ENCODE measurements at regions of chr19 and their contacts with region 1.

Region 1: DNA sequence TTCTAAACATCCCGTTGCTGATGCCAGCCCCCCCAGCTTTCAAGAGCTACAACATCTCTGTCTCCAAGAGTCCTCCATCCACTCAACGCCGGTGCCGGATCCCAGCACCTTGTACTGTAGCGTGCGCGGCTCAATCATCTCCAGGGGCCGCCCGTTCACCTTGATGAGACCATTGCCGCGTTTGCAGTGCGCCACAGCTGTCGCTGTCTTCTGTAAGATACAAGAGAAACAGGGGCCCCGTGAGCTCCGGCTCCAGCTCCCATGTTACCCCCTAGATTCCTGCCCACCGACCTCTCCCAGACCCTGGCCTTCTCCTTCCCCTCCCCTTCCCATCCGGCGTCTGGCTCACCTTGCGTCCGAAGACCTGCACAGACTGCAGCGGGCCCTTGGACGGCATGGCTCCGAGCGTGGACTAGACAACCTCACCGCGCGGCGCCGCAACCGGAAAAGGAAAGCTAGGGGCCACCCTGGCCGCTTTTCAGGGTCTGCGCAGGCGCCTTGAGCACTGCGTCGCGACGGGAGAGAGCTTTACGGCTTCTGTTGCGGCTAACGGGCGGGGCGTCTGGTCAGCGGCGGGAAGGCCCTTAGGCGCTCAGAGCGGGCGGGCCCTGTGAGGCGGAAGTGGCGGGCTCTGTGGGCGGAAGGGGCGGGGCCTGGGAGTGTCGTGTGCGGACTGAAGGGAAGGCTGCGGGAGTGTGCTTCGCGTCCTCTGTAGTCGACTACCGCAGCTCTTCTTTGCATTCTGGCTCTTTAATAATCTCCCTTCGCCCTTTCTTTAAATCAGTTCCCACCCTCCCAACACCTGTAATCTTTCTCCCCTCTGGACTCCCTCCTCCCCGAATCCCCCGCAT is at the start of gene RPS16:
- DNase-seq: peak; percentile 100
- ATAC-seq: peak; percentile 87
- H3K4me3 ChIP-seq: peak within 1 kb of the TSS; percentile 29 to 58
- H3K27ac ChIP-seq: peak within 1 kb of the TSS; percentile 84
- H3K4me1 ChIP-seq: peaks cover 77% of the 10 kb centered on the region
- H3K27me3 ChIP-seq: no peaks in the 10 kb centered on the region
- CTCF ChIP-seq: no peak
- total RNA-seq, gene RPS16: 27,832 TPM

Region 2: DNA sequence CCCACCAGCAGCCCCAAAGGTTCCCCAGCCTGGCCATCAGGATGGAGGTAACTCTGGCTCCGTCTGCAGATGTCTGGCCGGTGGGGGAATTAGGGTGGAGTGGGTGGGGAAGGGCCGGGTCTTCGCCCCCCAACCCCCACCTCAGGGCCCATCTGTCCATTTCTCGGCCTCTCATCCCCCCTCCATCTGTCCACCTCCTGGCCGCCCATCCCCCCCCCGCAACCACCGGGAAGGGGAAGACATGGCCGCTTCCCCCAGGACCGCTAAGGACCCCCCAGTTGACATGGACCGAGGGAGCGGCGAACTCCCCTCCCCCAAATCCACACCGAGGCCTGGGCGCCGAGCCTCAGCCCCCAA is 115.9 kb before region 1 on chr19:
- CTCF ChIA-PET with region 1: interaction called, 10 read pairs
- POLR2A ChIA-PET with region 1: interaction called, 5 read pairs
- in situ Hi-C with region 1: no loop called
- intact Hi-C with region 1: no loop called
- DNase-seq: no peak
- ATAC-seq: no peak
- H3K4me3 ChIP-seq: peak overlapping the region; percentile 34 to 56
- H3K27ac ChIP-seq: no peak overlapping the region; the same call in 1 of the 2 replicates
- H3K4me1 ChIP-seq: peaks cover 4% of the 10 kb centered on the region
- H3K27me3 ChIP-seq: peaks cover 6% of the 10 kb centered on the region
- CTCF ChIP-seq: no peak

Region 3: GRCh38 chr19:39390755-39391592 is 44.8 kb before region 1 on chr19 and contains the starts of genes MED29 and PAF1:
- CTCF ChIA-PET with region 1: interaction called, 9 read pairs
- POLR2A ChIA-PET with region 1: interaction called, 524 read pairs
- in situ Hi-C with region 1: no loop called
- intact Hi-C with region 1: no loop called
- DNase-seq: peak; percentile 100
- ATAC-seq: peak; percentile 96
- H3K4me3 ChIP-seq: peak within 1 kb of the TSS; percentile 39 to 51
- H3K27ac ChIP-seq: peak within 1 kb of the TSS; percentile 86
- H3K4me1 ChIP-seq: peaks cover 24% of the 10 kb centered on the region
- H3K27me3 ChIP-seq: no peaks in the 10 kb centered on the region
- CTCF ChIP-seq: no peak
- total RNA-seq, gene MED29: 739 TPM
- total RNA-seq, gene PAF1: 901 TPM

Region 4: DNA sequence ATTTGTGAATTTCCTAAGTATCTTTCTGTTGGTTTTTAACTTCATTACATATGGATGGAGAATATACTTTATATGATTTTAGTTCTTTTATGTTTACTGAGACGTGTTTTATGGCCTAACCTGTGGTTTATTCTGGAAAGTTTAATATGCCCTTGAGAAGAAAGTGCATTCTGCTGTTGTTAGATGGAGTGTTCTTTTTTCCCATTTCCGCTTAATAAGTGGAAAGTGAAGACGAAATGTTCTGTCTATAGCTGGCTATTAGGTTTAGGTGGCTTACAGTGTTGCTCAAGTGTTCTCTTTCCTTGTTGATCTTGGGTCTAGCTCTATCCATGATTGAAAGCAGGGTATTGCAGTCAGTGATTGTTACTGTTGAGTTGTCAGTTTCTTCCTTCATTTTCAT is 27.7 kb after region 1 on chr19:
- CTCF ChIA-PET with region 1: interaction called, 20 read pairs
- POLR2A ChIA-PET with region 1: interaction called, 41 read pairs
- in situ Hi-C with region 1: no loop called
- intact Hi-C with region 1: no loop called
- DNase-seq: no peak
- ATAC-seq: no peak
- H3K4me3 ChIP-seq: no peak overlapping the region
- H3K27ac ChIP-seq: no peak overlapping the region
- H3K4me1 ChIP-seq: no peaks in the 10 kb centered on the region
- H3K27me3 ChIP-seq: no peaks in the 10 kb centered on the region
- CTCF ChIP-seq: no peak

Region 5: DNA sequence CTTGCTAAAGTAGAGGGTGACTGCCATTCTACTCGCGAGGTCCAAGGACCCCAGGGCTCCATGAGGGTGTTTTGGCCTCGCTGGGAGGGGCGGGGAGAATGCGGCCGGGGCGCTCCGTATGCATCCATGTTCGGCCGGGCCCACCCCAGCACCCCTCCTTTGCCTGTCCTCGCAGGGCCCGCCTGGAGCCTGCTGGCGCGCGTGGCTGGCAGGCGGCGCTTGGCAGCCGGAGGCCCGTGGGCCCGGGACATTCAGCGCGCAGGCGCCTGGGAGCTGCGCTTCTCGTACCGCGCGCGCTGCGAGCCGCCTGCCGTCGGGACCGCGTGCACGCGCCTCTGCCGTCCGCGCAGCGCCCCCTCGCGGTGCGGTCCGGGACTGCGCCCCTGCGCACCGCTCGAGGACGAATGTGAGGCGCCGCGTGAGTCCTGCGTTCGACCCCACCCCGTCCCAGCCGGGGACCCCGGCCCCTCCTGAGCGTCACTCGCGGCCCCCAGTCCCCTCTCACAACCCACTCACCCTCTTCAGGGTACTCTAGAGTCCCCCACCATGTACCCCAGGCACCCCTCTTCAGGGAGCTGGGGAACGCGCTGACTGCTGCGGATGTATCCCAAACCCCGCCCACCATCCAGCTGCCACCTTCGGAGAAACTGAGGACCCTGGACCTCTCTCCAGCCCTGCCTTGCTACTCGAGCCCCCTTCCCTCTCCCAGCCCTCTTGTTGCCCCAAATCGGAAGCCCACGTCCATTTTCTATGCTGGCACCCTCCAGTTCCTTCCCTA is 67.1 kb after region 1 on chr19:
- CTCF ChIA-PET with region 1: interaction called, 104 read pairs
- POLR2A ChIA-PET with region 1: interaction called, 66 read pairs
- in situ Hi-C with region 1: no loop called
- intact Hi-C with region 1: loop called (anchors 2 kb)
- DNase-seq: peak; percentile 93
- ATAC-seq: peak; percentile 24
- H3K4me3 ChIP-seq: peak overlapping the region in 1 of 2 experiments; percentile 34; a peak in 2 of 4 replicates
- H3K27ac ChIP-seq: peak overlapping the region; percentile 3; the same call in 1 of the 2 replicates
- H3K4me1 ChIP-seq: peaks cover 27% of the 10 kb centered on the region
- H3K27me3 ChIP-seq: peaks cover 8% of the 10 kb centered on the region
- CTCF ChIP-seq: no peak

Region 6: GRCh38 chr19:39563408-39563807 is 127.7 kb after region 1 on chr19:
- CTCF ChIA-PET with region 1: interaction called, 6 read pairs
- POLR2A ChIA-PET with region 1: interaction called, 23 read pairs
- in situ Hi-C with region 1: no loop called
- intact Hi-C with region 1: no loop called
- DNase-seq: peak; percentile 81
- ATAC-seq: peak; percentile 10
- H3K4me3 ChIP-seq: no peak overlapping the region
- H3K27ac ChIP-seq: no peak overlapping the region
- H3K4me1 ChIP-seq: peaks cover 3% of the 10 kb centered on the region
- H3K27me3 ChIP-seq: peaks cover 74% of the 10 kb centered on the region
- CTCF ChIP-seq: no peak

Region 7: DNA sequence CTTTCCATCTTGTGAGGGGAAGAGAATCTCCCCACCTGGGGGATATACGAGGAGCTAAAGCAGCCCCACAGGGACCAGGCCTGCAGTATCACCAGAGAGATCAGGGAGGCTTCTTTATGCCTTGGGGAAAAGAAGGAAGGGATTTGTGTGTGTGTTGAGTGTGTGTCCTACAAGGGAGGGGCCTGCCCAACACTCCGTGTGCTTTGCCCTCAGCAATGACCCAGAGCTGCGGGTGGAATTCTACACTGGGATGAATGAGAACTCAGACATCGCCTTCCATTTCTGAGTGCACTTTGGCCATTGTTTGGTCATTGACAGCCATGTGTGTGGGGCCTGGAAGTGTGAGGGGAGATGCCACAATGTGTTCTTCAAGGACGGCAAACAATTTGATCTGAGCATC is 204.5 kb after region 1 on chr19:
- CTCF ChIA-PET with region 1: no interaction called
- POLR2A ChIA-PET with region 1: no interaction called
- in situ Hi-C with region 1: no loop called
- intact Hi-C with region 1: no loop called
- DNase-seq: no peak
- ATAC-seq: peak; percentile 9
- H3K4me3 ChIP-seq: no peak overlapping the region
- H3K27ac ChIP-seq: no peak overlapping the region
- H3K4me1 ChIP-seq: no peaks in the 10 kb centered on the region
- H3K27me3 ChIP-seq: peaks cover 88% of the 10 kb centered on the region
- CTCF ChIP-seq: no peak

Region 8: DNA sequence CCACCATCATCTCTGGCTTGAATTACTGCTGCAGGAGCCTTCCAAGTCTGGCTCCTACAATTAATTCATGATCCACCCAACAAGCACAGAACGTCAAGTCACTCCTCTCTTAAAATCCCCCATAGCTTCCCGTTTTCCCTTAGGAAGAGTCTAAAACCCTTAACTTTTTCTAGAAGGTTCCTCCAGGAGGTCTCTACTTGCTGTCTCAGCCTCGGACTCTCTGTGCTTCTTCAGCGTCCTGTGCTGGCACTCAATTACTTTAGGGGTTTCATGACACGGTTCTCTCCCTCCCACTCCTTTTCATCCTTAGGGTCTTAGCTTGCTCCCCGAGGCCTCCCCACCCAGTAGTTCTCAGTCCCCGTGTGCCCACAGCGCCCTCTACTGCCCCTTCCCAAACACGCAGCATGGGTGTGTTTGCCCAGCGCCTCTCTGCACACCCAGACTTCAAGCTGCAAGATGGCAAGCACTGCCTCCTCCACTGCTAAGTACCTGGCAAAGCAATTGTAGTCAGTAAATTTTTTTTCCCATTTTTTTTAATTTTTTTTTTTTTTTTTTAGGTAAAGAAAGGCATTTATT is 729.7 kb after region 1 on chr19:
- CTCF ChIA-PET with region 1: interaction called, 10 read pairs
- POLR2A ChIA-PET with region 1: no interaction called
- in situ Hi-C with region 1: no loop called
- intact Hi-C with region 1: no loop called
- DNase-seq: peak; percentile 99
- ATAC-seq: peak; percentile 76
- H3K4me3 ChIP-seq: peak overlapping the region in 1 of 2 experiments; percentile 0; a peak in 1 of 4 replicates
- H3K27ac ChIP-seq: 0 out of 2 replicates have a peak overlapping the region, but pooled peaks have one; percentile 0
- H3K4me1 ChIP-seq: peaks cover 15% of the 10 kb centered on the region
- H3K27me3 ChIP-seq: no peaks in the 10 kb centered on the region
- CTCF ChIP-seq: no peak

Region 9: GRCh38 chr19:40312533-40312932 is 876.8 kb after region 1 on chr19:
- CTCF ChIA-PET with region 1: no interaction called
- POLR2A ChIA-PET with region 1: no interaction called
- in situ Hi-C with region 1: no loop called
- intact Hi-C with region 1: no loop called
- DNase-seq: no peak
- ATAC-seq: no peak
- H3K4me3 ChIP-seq: no peak overlapping the region
- H3K27ac ChIP-seq: no peak overlapping the region
- H3K4me1 ChIP-seq: no peaks in the 10 kb centered on the region
- H3K27me3 ChIP-seq: peaks cover 12% of the 10 kb centered on the region; the same call in 1 of the 2 replicates
- CTCF ChIP-seq: no peak